Activated T-helper 1 cell treated with anti-CD3 and anti-CD28 coated beads, Interleukin-12 subunit alpha, Interleukin-12 subunit beta, Interleukin-2, Interleukin-4 antibody, amounts not matched to agents 30 ng/mL and 10 ng/mL and 1 ng/mL, durations not matched to agents 14 hours and 24 hours and 36 hours (primary cell): ENCODE measurements at regions of chr19 and their contacts with region 1.

Region 1: DNA sequence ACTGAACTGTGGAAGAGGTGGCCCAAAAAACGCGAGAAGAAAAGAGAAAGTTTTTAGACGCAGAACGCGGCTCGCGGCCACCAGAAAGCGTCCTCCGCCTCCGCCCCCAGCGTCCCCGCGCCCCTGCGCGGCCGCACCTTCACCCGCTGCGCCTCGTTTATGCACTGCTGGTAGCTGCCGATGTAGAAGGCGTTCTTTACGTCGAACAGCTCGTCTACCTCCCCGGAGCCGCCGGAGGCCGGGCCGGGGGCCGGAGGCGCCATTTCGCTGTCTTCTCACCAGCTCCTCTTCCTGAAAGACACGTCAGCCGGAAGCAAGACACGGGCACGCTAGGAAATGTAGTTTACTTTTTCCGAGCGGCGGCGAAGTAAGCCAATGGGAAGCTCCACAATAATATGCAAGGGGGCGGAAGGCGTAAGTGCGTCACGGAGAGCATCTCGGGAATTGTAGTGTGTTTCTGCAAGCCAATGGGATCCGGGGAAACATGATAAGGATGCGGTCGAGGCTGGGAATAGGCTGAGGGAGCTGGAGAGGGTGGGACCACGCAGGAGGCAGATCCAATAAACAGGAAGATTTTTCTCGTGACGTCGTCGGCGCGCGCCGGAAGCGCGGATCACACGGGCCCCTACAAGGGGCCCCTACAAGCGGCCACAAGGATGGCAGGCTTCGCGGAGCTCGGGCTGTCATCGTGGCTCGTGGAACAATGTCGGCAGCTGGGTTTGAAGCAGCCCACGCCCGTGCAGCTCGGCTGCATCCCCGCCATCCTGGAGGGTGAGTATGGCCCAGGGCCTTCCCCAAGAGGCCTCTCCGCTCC is at the starts of genes COPE and DDX49:
- DNase-seq: peak; percentile 97
- H3K4me3 Mint-ChIP-seq: peak within 1 kb of the TSS; percentile 94
- H3K27ac Mint-ChIP-seq: peak within 1 kb of the TSS; percentile 84
- H3K4me1 Mint-ChIP-seq: peaks cover 21% of the 10 kb centered on the region
- H3K27me3 Mint-ChIP-seq: no peaks in the 10 kb centered on the region
- total RNA-seq, gene COPE: 221 and 229 TPM in 2 replicates
- total RNA-seq, gene DDX49: 101 and 114 TPM in 2 replicates

Region 2: DNA sequence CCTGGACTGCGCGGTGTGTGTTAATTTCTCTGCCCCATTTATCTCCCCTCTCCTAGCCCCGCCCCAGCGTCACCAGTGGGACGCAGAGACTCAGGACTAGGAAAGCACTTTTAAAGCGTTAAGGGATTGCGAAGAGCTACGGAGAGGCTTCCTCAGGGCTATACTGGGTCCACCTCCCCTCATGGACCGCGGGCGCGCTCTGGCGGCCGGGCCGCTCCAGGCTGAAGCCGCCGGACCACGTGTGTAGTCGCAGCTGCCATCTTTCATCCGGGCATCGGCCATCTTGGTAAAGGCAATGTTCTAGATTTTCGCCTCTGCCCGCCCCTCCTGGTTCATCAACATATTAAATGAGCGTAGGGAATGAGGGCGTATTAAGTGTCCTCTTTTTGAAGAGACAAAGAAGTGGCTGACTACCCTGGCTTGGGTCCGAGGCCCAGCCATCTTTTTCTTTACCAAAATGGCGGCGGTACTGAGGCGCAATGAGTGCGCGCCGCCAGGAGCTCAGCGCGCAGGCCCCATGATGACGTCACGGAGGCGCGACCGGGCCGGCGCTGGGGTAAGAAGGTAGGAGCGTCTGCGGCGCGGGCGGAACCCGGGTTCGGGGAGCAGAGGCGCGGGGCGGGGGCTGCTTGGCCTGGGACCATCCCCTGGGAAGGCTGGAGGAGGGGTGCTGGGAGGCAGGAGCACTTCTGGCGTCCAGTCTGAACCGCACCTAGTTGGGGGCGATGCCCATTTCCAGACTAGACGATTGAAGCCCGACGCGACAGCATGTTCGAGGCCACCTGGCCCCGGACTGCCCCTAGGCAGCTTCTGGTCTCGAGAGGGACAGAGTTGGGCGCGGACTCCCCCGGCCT is 986.6 kb before region 1 on chr19 and contains the start of gene CCDC124:
- intact Hi-C with region 1: loop called (anchors 5 kb)
- DNase-seq: peak; percentile 89
- H3K4me3 Mint-ChIP-seq: peak within 1 kb of the TSS; percentile 87
- H3K27ac Mint-ChIP-seq: peak within 1 kb of the TSS; percentile 82
- H3K4me1 Mint-ChIP-seq: peaks cover 21% of the 10 kb centered on the region
- H3K27me3 Mint-ChIP-seq: no peaks in the 10 kb centered on the region
- total RNA-seq, gene CCDC124: 122 and 128 TPM in 2 replicates

Region 3: GRCh38 chr19:18419195-18419698 is 500.0 kb before region 1 on chr19 and contains the start of gene SSBP4:
- intact Hi-C with region 1: loop called (anchors 2 kb)
- DNase-seq: peak; percentile 75
- H3K4me3 Mint-ChIP-seq: peak within 1 kb of the TSS; percentile 89
- H3K27ac Mint-ChIP-seq: peak within 1 kb of the TSS; percentile 82
- H3K4me1 Mint-ChIP-seq: peaks cover 78% of the 10 kb centered on the region
- H3K27me3 Mint-ChIP-seq: peaks cover 5% of the 10 kb centered on the region
- total RNA-seq, gene SSBP4: 135 and 141 TPM in 2 replicates

Region 4: DNA sequence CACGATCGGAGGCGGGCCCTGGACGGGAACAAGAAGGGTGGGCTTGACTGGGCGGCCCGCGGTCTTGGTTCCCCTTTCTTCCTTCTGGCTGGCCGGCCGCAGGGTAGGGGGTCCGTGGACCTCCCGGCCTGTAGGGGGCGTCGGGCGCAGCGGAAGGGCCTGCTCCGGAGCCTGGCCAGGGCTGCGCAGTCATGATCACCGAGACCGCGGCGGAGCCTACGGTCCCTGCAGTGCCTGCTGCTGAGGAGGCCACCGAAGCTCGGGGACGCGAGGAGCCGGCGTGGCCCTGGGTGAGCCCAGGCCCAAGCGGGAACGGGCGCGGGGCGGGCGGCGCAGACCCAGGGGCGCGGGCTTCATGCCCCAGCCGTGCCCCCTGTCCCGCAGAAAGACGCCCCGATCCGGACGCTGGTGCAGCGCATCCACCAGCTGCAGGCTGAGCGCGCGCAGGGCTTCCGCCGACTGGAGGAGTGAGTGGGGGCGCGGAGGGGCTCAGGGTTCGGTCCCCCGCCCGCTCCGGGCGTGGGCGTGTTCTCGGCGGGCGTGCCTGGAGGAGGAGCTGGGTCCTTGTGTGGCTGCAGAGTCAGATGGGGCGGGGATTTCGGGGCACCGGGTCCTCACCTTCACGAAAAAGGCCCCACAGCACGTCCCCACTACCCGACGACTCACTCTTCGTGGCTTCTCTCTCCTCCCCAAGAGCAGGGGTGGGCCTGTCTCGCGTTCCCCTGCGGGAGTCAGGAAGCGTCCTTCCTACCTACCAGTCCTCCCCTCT is 330.5 kb before region 1 on chr19 and contains the start of gene REX1BD:
- intact Hi-C with region 1: loop called (anchors 1 kb)
- DNase-seq: peak; percentile 86
- H3K4me3 Mint-ChIP-seq: peak within 1 kb of the TSS; percentile 90
- H3K27ac Mint-ChIP-seq: peak within 1 kb of the TSS; percentile 91
- H3K4me1 Mint-ChIP-seq: peaks cover 43% of the 10 kb centered on the region
- H3K27me3 Mint-ChIP-seq: no peaks in the 10 kb centered on the region
- total RNA-seq, gene REX1BD: 134 and 135 TPM in 2 replicates

Region 5: DNA sequence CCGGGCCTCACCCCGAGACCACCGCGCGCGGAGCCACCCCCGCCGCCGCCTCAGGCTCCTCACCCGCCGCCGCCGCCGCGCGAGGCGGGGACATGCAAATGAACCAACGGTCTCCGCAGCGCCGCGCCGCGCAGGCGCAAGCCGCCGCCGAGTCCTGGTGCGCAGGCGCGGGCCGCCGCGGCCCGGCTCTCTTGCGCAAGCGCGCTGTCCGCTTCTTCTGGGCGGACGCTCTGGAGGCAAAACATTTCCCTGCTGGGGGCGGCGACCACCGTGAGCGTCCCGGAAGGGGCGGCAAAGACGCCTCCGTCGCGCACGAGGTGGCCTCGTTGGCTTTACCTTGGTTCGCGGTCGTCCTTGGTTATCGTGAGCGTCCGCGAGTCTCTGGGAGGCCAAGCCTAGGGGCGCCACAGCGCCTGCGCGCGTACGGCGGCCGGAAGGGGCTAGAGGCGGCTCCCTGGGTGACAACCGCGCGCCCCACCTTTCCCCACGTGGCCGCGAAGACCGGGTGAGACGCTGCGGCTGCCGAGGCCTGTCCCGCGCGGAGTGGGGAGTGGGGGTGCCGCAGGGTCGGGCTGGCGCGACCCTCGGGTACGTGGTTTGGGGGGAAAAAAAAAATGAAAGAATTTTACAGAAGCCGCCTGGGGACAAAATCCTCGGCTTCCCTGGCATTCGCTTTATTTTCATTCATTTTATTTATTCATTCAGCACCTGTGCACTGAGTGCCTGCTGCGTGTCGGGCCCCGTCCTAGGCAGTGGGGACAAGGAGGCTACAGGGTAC is 114.3 kb after region 1 on chr19 and contains the starts of genes ARMC6 and SUGP2:
- intact Hi-C with region 1: loop called (anchors 1 kb)
- DNase-seq: peak; percentile 89
- H3K4me3 Mint-ChIP-seq: peak within 1 kb of the TSS; percentile 98
- H3K27ac Mint-ChIP-seq: peak within 1 kb of the TSS; percentile 98
- H3K4me1 Mint-ChIP-seq: peaks cover 25% of the 10 kb centered on the region
- H3K27me3 Mint-ChIP-seq: no peaks in the 10 kb centered on the region
- total RNA-seq, gene ARMC6: 54.9 and 56.5 TPM in 2 replicates
- total RNA-seq, gene SUGP2: 114 and 128 TPM in 2 replicates

Region 6: GRCh38 chr19:19320362-19321142 is 401.3 kb after region 1 on chr19 and contains the starts of genes MAU2 and SUGP1:
- intact Hi-C with region 1: loop called (anchors 1 kb)
- DNase-seq: peak; percentile 89
- H3K4me3 Mint-ChIP-seq: peak within 1 kb of the TSS; percentile 94
- H3K27ac Mint-ChIP-seq: peak within 1 kb of the TSS; percentile 98
- H3K4me1 Mint-ChIP-seq: peaks cover 20% of the 10 kb centered on the region
- H3K27me3 Mint-ChIP-seq: no peaks in the 10 kb centered on the region
- total RNA-seq, gene MAU2: 71.4 and 73.4 TPM in 2 replicates
- total RNA-seq, gene SUGP1: 76.3 and 79.8 TPM in 2 replicates